ENCODE measurements at regions of chr7 and their contacts with region 1.

Region 1: DNA sequence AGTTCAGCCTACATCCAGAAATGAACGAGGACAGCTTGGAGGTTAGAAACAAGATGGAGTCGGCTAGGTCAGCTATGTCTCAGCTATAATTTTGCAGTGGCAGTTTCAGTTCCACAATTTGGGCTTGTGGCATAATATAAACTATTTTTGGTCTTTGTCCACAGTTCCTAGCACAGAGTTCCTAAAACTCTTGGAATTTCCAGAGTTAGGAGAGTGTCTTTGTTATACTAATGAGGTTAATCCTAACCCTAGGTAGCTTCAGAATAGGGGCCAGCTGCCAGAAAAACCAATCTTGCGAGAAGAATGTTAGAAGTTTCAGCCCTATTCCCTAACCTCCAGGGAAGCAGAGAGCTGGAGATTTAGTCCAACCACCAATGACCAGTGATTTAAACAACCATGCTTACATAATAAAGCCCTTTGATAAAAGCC is 131.9 kb downstream of the AKR1D1 start:
- DNase-seq: no peak
- ATAC-seq: peak; percentile 66
- H3K4me3 Mint-ChIP-seq: no peak overlapping the region
- H3K27ac Mint-ChIP-seq: peak overlapping the region; percentile 98
- H3K4me1 Mint-ChIP-seq: peaks cover 74% of the 10 kb centered on the region
- H3K27me3 Mint-ChIP-seq: peaks cover 12% of the 10 kb centered on the region
- CTCF ChIP-seq: no peak

Region 2: DNA sequence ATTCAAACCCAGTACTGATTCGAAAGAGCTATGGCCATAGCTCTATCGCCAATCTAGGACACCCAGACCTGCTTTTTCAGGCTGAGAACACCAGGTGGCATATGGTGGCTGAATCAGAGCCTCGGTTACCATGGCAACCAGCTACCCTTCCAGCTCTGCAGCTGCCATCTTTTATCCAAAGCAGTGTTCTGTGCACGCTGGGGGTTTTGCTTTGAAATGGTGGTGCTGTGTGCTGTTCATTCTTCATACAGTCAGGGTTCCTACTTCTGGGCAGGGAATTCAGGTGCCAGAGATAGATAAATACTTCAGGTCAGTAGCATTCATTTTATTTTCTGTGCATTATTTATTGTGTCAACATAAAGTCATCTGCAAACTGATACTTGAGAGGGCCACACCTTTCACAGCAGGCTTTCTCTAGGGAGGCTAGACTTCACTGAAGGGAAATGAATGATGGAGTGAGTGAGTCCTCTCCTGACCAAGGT is 46.5 kb before region 1 on chr7:
- CTCF ChIA-PET with region 1: interaction called, 10 read pairs
- POLR2A ChIA-PET with region 1: no interaction called
- DNase-seq: peak; percentile 84
- ATAC-seq: peak; percentile 99
- H3K4me3 Mint-ChIP-seq: no peak overlapping the region
- H3K27ac Mint-ChIP-seq: no peak overlapping the region
- H3K4me1 Mint-ChIP-seq: peaks cover 10% of the 10 kb centered on the region
- H3K27me3 Mint-ChIP-seq: peaks cover 11% of the 10 kb centered on the region
- CTCF ChIP-seq: 0 out of 2 replicates have a peak, but pooled peaks have one; percentile 29